AG04449 (cell line): ENCODE measurements at regions of chr12 and their contacts with region 1.

Region 1: GRCh38 chr12:112198120-112198733 is 72.9 kb downstream of the TRAFD1 start:
- DNase-seq: no peak
- H3K4me3 ChIP-seq: no peak overlapping the region
- CTCF ChIP-seq: peak; percentile 74

Region 2: DNA sequence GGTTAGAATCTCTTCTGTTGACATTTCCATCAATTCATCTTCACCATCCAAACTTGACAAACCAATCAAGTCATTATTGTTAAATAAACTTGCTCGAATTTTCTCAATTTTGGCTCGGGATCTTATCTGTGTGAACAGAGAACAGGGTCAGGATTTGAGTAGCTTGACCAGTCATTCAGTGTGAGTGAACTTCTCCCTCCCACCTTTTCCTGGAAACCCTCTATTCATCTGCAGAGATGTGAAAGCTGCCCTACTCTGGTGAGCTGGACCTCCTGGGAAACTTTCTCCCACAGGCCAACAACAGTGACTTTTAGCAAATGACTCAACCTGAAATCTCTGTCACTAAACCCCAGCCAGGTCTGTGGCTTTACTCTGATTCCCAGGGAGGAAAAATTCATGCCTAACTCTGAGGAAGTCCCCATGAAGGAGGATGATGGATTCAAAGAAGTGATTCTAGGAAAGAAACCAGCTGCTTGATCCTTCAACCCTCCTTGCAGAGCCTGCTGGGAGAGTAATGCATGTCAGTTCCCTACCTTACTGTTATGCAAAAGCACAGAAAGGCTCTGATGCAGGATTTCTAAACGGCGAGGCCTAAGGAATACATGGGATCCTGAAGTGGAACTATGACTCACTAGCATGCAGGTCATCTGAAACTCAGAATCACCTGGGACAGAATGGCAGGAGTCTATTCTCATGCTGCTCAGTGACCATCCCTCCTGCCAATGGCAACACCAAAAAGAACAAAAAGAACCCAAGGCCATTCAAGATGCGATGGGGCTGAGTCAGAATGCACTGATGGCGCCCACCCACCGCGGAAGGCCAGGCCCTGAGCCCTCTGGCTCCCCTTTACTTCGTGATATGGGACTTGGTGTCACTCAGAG is 14.8 kb before region 1 on chr12:
- CTCF ChIA-PET with region 1: interaction called, 54 read pairs
- POLR2A ChIA-PET with region 1: no interaction called
- DNase-seq: no peak
- H3K4me3 ChIP-seq: no peak overlapping the region
- CTCF ChIP-seq: no peak

Region 3: DNA sequence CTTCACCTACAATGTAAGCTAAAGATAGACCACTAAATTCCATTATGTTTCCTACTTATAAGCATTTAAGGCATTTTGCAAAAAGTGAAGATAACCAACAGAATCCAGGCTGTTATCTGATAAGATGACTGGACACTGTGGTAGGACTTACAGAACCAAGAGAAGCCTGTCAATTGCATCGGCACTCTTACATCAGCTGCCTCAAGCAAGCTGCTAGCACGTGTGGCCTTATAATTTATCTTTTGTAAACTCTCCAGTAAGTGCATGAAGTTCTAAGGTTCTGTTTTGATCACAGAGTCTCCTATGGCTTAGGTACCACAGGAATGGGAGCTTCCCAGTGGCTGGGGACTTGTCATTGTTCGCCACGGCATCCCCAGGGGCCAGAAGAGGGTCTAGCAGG is 15.8 kb after region 1 on chr12:
- CTCF ChIA-PET with region 1: interaction called, 23 read pairs
- POLR2A ChIA-PET with region 1: no interaction called
- DNase-seq: no peak
- H3K4me3 ChIP-seq: no peak overlapping the region
- CTCF ChIP-seq: no peak

Region 4: GRCh38 chr12:112219195-112219594 is 21.0 kb after region 1 on chr12:
- CTCF ChIA-PET with region 1: interaction called, 14 read pairs
- POLR2A ChIA-PET with region 1: no interaction called
- DNase-seq: no peak
- H3K4me3 ChIP-seq: no peak overlapping the region
- CTCF ChIP-seq: no peak

Region 5: GRCh38 chr12:112236386-112236785 is 38.2 kb after region 1 on chr12:
- CTCF ChIA-PET with region 1: interaction called, 11 read pairs
- POLR2A ChIA-PET with region 1: no interaction called
- DNase-seq: no peak
- H3K4me3 ChIP-seq: no peak overlapping the region
- CTCF ChIP-seq: no peak

Region 6: GRCh38 chr12:112328456-112329124 is 130.4 kb after region 1 on chr12:
- CTCF ChIA-PET with region 1: no interaction called
- POLR2A ChIA-PET with region 1: no interaction called
- DNase-seq: no peak
- H3K4me3 ChIP-seq: no peak overlapping the region
- CTCF ChIP-seq: no peak

Region 7: DNA sequence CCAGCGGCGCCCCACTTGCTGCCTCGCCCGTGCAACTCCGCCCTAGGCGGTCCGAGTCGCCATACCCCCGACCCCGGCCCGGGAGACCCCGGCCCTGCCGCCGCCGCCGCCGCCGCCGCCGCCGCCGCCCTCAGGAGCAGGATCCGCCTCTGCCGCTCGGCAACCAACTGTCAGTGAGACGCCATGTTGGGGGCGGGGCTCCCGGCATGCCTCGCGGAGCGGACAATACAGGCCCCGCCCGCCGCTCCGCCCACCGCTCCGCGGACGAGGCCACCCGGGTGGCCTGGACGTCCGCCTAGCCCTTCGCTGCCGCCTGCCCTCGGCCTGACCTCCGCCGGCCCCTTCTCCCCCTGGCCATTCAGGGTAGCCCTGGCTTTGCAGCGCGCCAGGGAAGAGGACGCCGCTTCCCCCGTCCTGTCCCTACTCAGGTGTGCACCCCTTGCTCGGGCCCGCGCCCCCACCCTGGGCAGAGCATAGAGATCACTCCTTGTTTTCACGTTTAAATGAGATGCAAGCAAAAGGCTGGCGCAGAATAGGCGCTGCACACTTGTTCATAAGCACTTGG is 184.1 kb after region 1 on chr12 and contains the start of gene HECTD4:
- CTCF ChIA-PET with region 1: interaction called, 207 read pairs
- POLR2A ChIA-PET with region 1: interaction called, 6 read pairs
- DNase-seq: no peak
- H3K4me3 ChIP-seq: peak within 1 kb of the TSS; percentile 72
- CTCF ChIP-seq: no peak

Region 8: GRCh38 chr12:112409064-112409905 is 211.1 kb after region 1 on chr12 and contains the start of gene RPL6:
- CTCF ChIA-PET with region 1: interaction called, 59 read pairs
- POLR2A ChIA-PET with region 1: no interaction called
- DNase-seq: peak; percentile 70
- H3K4me3 ChIP-seq: peak within 1 kb of the TSS; percentile 86
- CTCF ChIP-seq: no peak

Region 9: GRCh38 chr12:112906712-112907414 is 708.6 kb after region 1 on chr12 and contains the start of gene OAS1:
- CTCF ChIA-PET with region 1: no interaction called
- POLR2A ChIA-PET with region 1: no interaction called
- DNase-seq: no peak
- H3K4me3 ChIP-seq: no peak within 1 kb of the TSS; the same call in none of the 2 replicates
- CTCF ChIP-seq: no peak